Ascending aorta (tissue), 2 donors: ENCODE measurements at regions of chr14 and their contacts with region 1.

Region 1: DNA sequence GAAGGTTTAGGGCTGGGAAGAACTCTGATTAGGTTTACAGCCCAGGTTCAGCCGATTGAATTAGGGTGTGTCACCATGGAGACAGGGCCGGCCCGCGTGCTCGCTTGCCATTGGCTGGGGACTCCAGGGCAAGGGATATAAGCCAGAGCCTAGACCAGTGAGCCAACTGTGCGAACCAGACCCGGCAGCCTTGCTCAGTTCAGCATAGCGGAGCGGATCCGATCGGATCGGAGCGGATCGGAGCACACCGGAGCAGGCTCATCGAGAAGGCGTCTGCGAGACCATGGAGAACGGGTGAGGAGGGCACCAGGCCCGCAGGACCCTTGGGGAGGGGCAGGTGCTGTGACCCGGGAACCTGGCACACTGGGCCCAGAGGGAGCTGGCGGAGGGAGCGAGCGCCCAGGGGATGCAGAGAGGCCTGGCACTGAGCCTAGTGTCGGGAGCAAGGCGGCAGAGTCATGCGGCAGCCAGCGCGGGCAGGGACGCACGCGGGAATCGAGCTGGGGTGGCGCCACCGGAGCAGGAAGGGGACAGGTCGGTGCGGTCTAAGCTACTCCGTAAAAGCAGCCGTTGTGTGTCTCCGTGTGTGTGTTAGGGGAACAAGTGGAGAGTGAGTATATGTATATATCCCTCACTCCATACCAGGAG is at the start of gene PNP:
- DNase-seq: peak; percentile 77 to 96
- H3K4me3 ChIP-seq: peak within 1 kb of the TSS; percentile 90 to 91
- H3K27ac ChIP-seq: peak within 1 kb of the TSS; percentile 94 to 96
- H3K4me1 ChIP-seq: peaks cover 0 to 12% of the 10 kb centered on the region in 2 donors
- H3K27me3 ChIP-seq: no peaks in the 10 kb centered on the region
- CTCF ChIP-seq: no peak
- total RNA-seq, gene PNP: 62.7 TPM

Region 2: GRCh38 chr14:20387576-20387975 is 81.8 kb before region 1 on chr14:
- intact Hi-C with region 1: no loop called
- DNase-seq: peak in 1 of 2 donors; percentile 40
- H3K4me3 ChIP-seq: no peak overlapping the region
- H3K27ac ChIP-seq: no peak overlapping the region
- H3K4me1 ChIP-seq: no peaks in the 10 kb centered on the region
- H3K27me3 ChIP-seq: no peaks in the 10 kb centered on the region
- CTCF ChIP-seq: no peak

Region 3: DNA sequence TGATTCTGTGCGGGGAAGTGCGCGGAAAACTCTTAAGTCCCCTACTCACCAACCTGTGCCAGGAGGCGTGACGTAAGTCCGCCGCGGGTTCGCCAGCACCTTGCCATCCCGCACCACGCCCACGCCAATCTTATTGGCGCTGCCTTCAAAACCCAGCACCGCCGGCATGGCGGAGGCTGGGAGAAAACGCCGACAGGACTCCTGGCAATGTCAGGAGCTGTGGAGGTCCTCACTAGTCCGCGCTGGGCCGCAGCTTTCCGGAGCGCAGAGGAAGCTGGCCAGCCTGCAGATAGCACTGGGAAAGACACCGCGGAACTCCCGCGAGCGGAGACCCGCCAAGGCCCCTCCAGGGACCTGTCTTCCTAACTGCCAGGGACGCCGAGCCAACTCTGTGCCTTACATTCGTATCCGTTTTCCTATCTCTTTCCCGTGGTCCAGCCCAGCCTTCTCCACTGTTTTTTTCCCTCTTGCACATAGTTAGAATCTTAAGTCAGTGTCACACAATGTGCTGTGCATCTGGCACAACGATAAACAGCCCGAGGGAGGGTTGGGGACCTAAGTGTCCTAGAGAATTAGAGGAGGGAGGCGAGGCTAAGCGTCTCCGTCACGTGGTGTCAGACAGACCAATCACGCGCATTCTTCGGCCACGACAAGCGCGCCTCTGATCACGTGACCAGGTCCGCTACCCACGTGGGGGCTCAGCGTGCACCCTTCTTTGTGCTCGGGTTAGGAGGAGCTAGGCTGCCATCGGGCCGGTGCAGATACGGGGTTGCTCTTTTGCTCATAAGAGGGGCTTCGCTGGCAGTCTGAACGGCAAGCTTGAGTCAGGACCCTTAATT is 14.6 kb before region 1 on chr14 and contains the starts of genes APEX1 and OSGEP:
- intact Hi-C with region 1: loop called (anchors 2 kb)
- DNase-seq: peak; percentile 93 to 99
- H3K4me3 ChIP-seq: peak within 1 kb of the TSS; percentile 83 to 99
- H3K27ac ChIP-seq: peak within 1 kb of the TSS; percentile 93 to 97
- H3K4me1 ChIP-seq: peaks cover 7 to 19% of the 10 kb centered on the region in 2 donors
- H3K27me3 ChIP-seq: no peaks in the 10 kb centered on the region
- CTCF ChIP-seq: no peak
- total RNA-seq, gene APEX1: 21.5 TPM
- total RNA-seq, gene OSGEP: 26.7 TPM